Mammary epithelial cell (primary cell): ENCODE measurements at regions of chr12 and their contacts with region 1.

Region 1: GRCh38 chr12:52903285-52903854 is 1.5 kb downstream of the KRT8 start:
- DNase-seq: peak; percentile 76
- H3K4me3 ChIP-seq: peak overlapping the region; percentile 58 to 80 (median 65)
- H3K27ac ChIP-seq: no peak overlapping the region
- H3K4me1 ChIP-seq: peaks cover 32% of the 10 kb centered on the region
- H3K27me3 ChIP-seq: no peaks in the 10 kb centered on the region
- CTCF ChIP-seq: no peak

Region 2: GRCh38 chr12:52121824-52122539 is 781.4 kb before region 1 on chr12:
- CTCF ChIA-PET with region 1: no interaction called
- dilution Hi-C with region 1: loop called (anchors 5 kb)
- in situ Hi-C with region 1: no loop called
- intact Hi-C with region 1: no loop called
- DNase-seq: no peak
- H3K4me3 ChIP-seq: no peak overlapping the region
- H3K27ac ChIP-seq: no peak overlapping the region
- H3K4me1 ChIP-seq: peaks cover 5% of the 10 kb centered on the region
- H3K27me3 ChIP-seq: no peaks in the 10 kb centered on the region
- CTCF ChIP-seq: peak; percentile 69 to 82

Region 3: GRCh38 chr12:52230327-52231291 is 672.8 kb before region 1 on chr12:
- CTCF ChIA-PET with region 1: interaction called, 10 read pairs
- dilution Hi-C with region 1: no loop called
- in situ Hi-C with region 1: no loop called
- intact Hi-C with region 1: no loop called
- DNase-seq: peak; percentile 75
- H3K4me3 ChIP-seq: peak overlapping the region in 1 of 3 experiments; percentile 5
- H3K27ac ChIP-seq: peak overlapping the region; percentile 79
- H3K4me1 ChIP-seq: peaks cover 57% of the 10 kb centered on the region
- H3K27me3 ChIP-seq: no peaks in the 10 kb centered on the region
- CTCF ChIP-seq: no peak

Region 4: GRCh38 chr12:52949413-52950331 is 46.3 kb after region 1 on chr12:
- CTCF ChIA-PET with region 1: no interaction called
- dilution Hi-C with region 1: no loop called
- in situ Hi-C with region 1: no loop called
- intact Hi-C with region 1: loop called (anchors 1 kb)
- DNase-seq: peak; percentile 93
- H3K4me3 ChIP-seq: peak overlapping the region; percentile 65 to 84 (median 66)
- H3K27ac ChIP-seq: peak overlapping the region; percentile 80
- H3K4me1 ChIP-seq: peaks cover 33% of the 10 kb centered on the region
- H3K27me3 ChIP-seq: no peaks in the 10 kb centered on the region
- CTCF ChIP-seq: no peak

Region 5: GRCh38 chr12:52956987-52957386 is 53.6 kb after region 1 on chr12:
- CTCF ChIA-PET with region 1: no interaction called
- dilution Hi-C with region 1: loop called (anchors 5 kb)
- in situ Hi-C with region 1: no loop called
- intact Hi-C with region 1: no loop called
- DNase-seq: no peak
- H3K4me3 ChIP-seq: no peak overlapping the region
- H3K27ac ChIP-seq: no peak overlapping the region
- H3K4me1 ChIP-seq: no peaks in the 10 kb centered on the region
- H3K27me3 ChIP-seq: no peaks in the 10 kb centered on the region
- CTCF ChIP-seq: no peak

Region 6: DNA sequence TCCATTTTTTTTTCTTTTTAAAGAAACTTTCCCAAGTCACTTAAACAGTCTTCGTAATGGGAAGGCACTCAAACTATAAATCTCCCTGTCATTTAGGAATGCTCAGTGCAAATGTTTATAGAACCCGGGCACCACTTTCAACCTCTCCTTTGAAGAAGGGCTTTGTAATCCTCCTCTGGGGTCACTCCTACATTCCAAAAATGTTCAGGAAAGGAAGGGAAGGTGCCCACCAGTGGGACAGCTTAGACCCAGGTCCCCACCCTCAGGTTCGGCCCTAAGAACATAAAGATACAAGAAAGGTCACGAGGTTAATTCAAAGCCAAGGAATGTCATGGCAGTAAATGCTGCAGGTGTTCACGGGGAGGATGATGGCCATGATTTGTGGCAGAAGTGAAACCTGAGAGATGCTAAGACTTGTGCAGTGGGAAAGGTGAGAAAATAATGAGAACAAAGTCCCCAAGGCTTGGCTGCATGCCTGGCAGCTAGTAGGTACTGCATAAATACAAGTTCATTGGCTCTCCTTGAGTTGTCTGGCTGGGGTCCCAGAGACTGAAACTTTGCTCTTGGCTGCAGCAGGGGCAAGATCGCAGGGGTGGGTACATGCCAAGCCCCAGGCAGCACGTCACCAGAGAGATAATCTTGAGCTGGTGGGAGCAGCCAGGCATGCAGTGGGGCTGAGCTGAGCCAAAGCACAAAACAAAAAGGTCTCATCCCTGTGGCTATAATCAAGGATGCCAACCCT is 66.6 kb after region 1 on chr12:
- CTCF ChIA-PET with region 1: interaction called, 10 read pairs
- dilution Hi-C with region 1: no loop called
- in situ Hi-C with region 1: no loop called
- intact Hi-C with region 1: loop called (anchors 2 kb)
- DNase-seq: no peak
- H3K4me3 ChIP-seq: no peak overlapping the region
- H3K27ac ChIP-seq: no peak overlapping the region
- H3K4me1 ChIP-seq: peaks cover 15% of the 10 kb centered on the region
- H3K27me3 ChIP-seq: peaks cover 7% of the 10 kb centered on the region
- CTCF ChIP-seq: no peak

Region 7: GRCh38 chr12:52980693-52981423 is 77.5 kb after region 1 on chr12:
- CTCF ChIA-PET with region 1: no interaction called
- dilution Hi-C with region 1: no loop called
- in situ Hi-C with region 1: no loop called
- intact Hi-C with region 1: loop called (anchors 1 kb)
- DNase-seq: peak; percentile 80
- H3K4me3 ChIP-seq: no peak overlapping the region
- H3K27ac ChIP-seq: no peak overlapping the region
- H3K4me1 ChIP-seq: no peaks in the 10 kb centered on the region
- H3K27me3 ChIP-seq: no peaks in the 10 kb centered on the region
- CTCF ChIP-seq: peak; percentile 99